ENCODE measurements at regions of chr17 and their contacts with region 1.

Region 1: GRCh38 chr17:29722411-29723198 is 99.9 kb upstream of the CORO6 start:
- DNase-seq: peak in 33 of 35 experiments; percentile 24 to 84 (median 58)
- ATAC-seq: peak; percentile 79 to 86 (median 82)
- H3K4me3 ChIP-seq: peak overlapping the region; percentile 10 to 20
- H3K4me3 Mint-ChIP-seq: peak overlapping the region; percentile 43 to 57 (median 55)
- H3K27ac ChIP-seq: peak overlapping the region; percentile 73
- H3K27ac Mint-ChIP-seq: peak overlapping the region; percentile 90 to 93
- H3K4me1 ChIP-seq: peaks cover 53 to 65% of the 10 kb centered on the region in 2 experiments
- H3K4me1 Mint-ChIP-seq: peaks cover 82 to 90% (median 86%) of the 10 kb centered on the region in 3 donors
- H3K27me3 ChIP-seq: no peaks in the 10 kb centered on the region
- H3K27me3 Mint-ChIP-seq: no peaks in the 10 kb centered on the region

Region 2: DNA sequence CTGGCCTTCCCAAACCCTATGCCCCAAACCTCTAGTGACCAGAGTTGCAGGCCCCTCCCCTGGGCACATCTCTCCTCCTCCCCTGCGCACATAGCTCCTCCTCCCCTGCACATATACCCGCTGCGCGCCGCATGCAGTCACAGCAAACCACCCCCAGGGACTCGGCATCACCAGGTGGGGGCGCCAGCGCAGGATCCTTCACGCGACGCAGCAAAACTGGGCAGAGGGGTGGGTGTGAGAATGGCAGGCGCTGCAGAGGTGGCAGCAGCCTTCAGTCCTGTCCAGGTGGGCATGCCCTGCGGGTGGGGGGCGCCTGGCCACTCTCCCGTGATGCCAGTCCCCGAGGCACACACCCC is 105.5 kb before region 1 on chr17:
- CTCF ChIA-PET with region 1: interaction called, 7 to 12 read pairs
- POLR2A ChIA-PET with region 1: no interaction called
- DNase-seq: peak; percentile 77 to 94 (median 87)
- ATAC-seq: peak; percentile 57 to 67 (median 62)
- H3K4me3 ChIP-seq: peak overlapping the region; percentile 53 to 57
- H3K4me3 Mint-ChIP-seq: peak overlapping the region; percentile 78 to 89 (median 87)
- H3K27ac ChIP-seq: no peak overlapping the region
- H3K27ac Mint-ChIP-seq: peak overlapping the region; percentile 36 to 69
- H3K4me1 ChIP-seq: peaks cover 30 to 64% of the 10 kb centered on the region in 2 experiments
- H3K4me1 Mint-ChIP-seq: peaks cover 35 to 47% (median 41%) of the 10 kb centered on the region in 3 donors
- H3K27me3 ChIP-seq: peaks cover 0 to 9% of the 10 kb centered on the region in 2 experiments
- H3K27me3 Mint-ChIP-seq: no peaks in the 10 kb centered on the region

Region 3: DNA sequence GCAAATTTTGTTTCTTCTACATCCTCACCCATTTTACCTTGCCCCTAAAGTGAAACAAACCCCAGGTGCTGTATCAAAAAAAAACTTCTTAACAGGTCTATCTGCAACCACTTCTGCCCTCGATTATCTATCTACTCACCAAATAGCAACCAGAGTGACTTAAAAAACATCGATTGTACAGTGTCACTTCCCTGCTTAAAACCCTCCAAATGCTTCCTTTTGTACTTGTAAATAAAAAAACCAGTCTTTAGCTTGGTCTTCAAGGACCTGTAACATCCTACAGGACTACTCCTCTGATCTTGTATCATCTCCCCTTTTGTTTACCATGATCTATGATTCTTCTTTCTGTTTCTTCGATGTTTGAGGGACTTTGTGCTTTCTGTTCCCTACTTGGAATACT is 17.2 kb before region 1 on chr17:
- CTCF ChIA-PET with region 1: interaction called in 1 of 2 experiments, 8 read pairs
- POLR2A ChIA-PET with region 1: interaction called, 9 to 19 read pairs
- DNase-seq: peak in 1 of 35 experiments; percentile 45
- ATAC-seq: peak in 2 of 4 experiments; percentile 3 to 17
- H3K4me3 ChIP-seq: peak overlapping the region in 1 of 2 donors; percentile 8
- H3K4me3 Mint-ChIP-seq: peak overlapping the region; percentile 48 to 84 (median 56)
- H3K27ac ChIP-seq: peak overlapping the region; percentile 96
- H3K27ac Mint-ChIP-seq: peak overlapping the region; percentile 91 to 98
- H3K4me1 ChIP-seq: peaks cover 31 to 35% of the 10 kb centered on the region in 2 experiments
- H3K4me1 Mint-ChIP-seq: peaks cover 51 to 60% (median 51%) of the 10 kb centered on the region in 3 donors
- H3K27me3 ChIP-seq: no peaks in the 10 kb centered on the region
- H3K27me3 Mint-ChIP-seq: no peaks in the 10 kb centered on the region

Region 4: GRCh38 chr17:29732613-29733012 is 10.0 kb after region 1 on chr17:
- CTCF ChIA-PET with region 1: interaction called in 1 of 2 experiments, 8 read pairs
- POLR2A ChIA-PET with region 1: interaction called in 1 of 2 experiments, 14 read pairs
- DNase-seq: no peak
- ATAC-seq: no peak
- H3K4me3 ChIP-seq: no peak overlapping the region
- H3K4me3 Mint-ChIP-seq: peak overlapping the region in 1 of 3 donors; percentile 8
- H3K27ac ChIP-seq: no peak overlapping the region
- H3K27ac Mint-ChIP-seq: peak overlapping the region; percentile 61 to 65
- H3K4me1 ChIP-seq: peaks cover 7 to 8% of the 10 kb centered on the region in 2 experiments
- H3K4me1 Mint-ChIP-seq: peaks cover 58 to 66% (median 60%) of the 10 kb centered on the region in 3 donors
- H3K27me3 ChIP-seq: no peaks in the 10 kb centered on the region
- H3K27me3 Mint-ChIP-seq: no peaks in the 10 kb centered on the region

Region 5: DNA sequence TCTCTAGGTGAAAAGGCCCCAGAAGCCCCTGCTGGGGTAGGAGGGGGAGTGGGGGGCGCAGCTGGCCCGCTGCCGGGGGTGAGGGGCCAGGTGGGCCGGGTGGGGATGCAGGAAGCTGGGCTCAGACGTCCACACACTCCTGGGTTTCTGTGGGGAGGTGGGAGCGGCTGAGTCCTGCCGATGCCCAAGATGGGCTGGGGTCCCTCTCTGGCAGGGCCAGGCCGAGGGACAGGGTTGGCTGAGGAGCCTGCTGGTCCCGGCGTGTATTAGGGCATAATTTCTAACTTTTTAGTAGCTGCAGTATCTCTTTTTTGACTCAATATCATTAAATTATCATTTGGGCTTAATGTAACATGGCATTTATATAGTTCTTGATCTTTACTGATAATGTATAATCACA is 21.5 kb after region 1 on chr17:
- CTCF ChIA-PET with region 1: interaction called in 1 of 2 experiments, 4 read pairs
- POLR2A ChIA-PET with region 1: interaction called, 4 to 11 read pairs
- DNase-seq: no peak
- ATAC-seq: no peak
- H3K4me3 ChIP-seq: no peak overlapping the region
- H3K4me3 Mint-ChIP-seq: no peak overlapping the region
- H3K27ac ChIP-seq: no peak overlapping the region
- H3K27ac Mint-ChIP-seq: peak overlapping the region in 1 of 2 donors; percentile 61
- H3K4me1 ChIP-seq: peaks cover 24 to 36% of the 10 kb centered on the region in 2 experiments
- H3K4me1 Mint-ChIP-seq: peaks cover 86 to 90% (median 87%) of the 10 kb centered on the region in 3 donors
- H3K27me3 ChIP-seq: no peaks in the 10 kb centered on the region
- H3K27me3 Mint-ChIP-seq: no peaks in the 10 kb centered on the region

Region 6: GRCh38 chr17:29760761-29761696 is 38.4 kb after region 1 on chr17:
- CTCF ChIA-PET with region 1: interaction called in 1 of 2 experiments, 13 read pairs
- POLR2A ChIA-PET with region 1: interaction called in 1 of 2 experiments, 11 read pairs
- DNase-seq: peak; percentile 81 to 96 (median 92)
- ATAC-seq: peak; percentile 87 to 91 (median 88)
- H3K4me3 ChIP-seq: peak overlapping the region; percentile 85 to 96
- H3K4me3 Mint-ChIP-seq: peak overlapping the region; percentile 87 to 98 (median 91)
- H3K27ac ChIP-seq: peak overlapping the region; percentile 75
- H3K27ac Mint-ChIP-seq: peak overlapping the region; percentile 94 to 98
- H3K4me1 ChIP-seq: peaks cover 22 to 25% of the 10 kb centered on the region in 2 experiments
- H3K4me1 Mint-ChIP-seq: peaks cover 32 to 40% (median 40%) of the 10 kb centered on the region in 3 donors
- H3K27me3 ChIP-seq: no peaks in the 10 kb centered on the region
- H3K27me3 Mint-ChIP-seq: no peaks in the 10 kb centered on the region

Measured in T-cell (primary cell).